ENCODE measurements at regions of chr6 and their contacts with region 1.

Region 1: GRCh38 chr6:291697-292505 is at the start of gene DUSP22:
- DNase-seq: peak; percentile 76 to 79
- ATAC-seq: peak; percentile 79 to 83
- H3K4me3 ChIP-seq: peak within 1 kb of the TSS; percentile 66 to 88 (median 78)
- H3K27ac ChIP-seq: peak within 1 kb of the TSS; percentile 88 to 98 (median 96)
- H3K4me1 ChIP-seq: peaks cover 31 to 36% of the 10 kb centered on the region in 2 donors
- H3K27me3 ChIP-seq: no peaks in the 10 kb centered on the region
- CTCF ChIP-seq: peak in 2 of 5 experiments; percentile 8 to 13
- POLR2A ChIP-seq: peak; percentile 94 to 95
- total RNA-seq, gene DUSP22: 53.4 to 70.7 (median 61.3) TPM

Region 2: GRCh38 chr6:181049-181654 is 110.7 kb before region 1 on chr6:
- in situ Hi-C with region 1: no loop called
- intact Hi-C with region 1: no loop called
- DNase-seq: no peak
- ATAC-seq: no peak
- H3K4me3 ChIP-seq: no peak overlapping the region
- H3K27ac ChIP-seq: no peak overlapping the region
- H3K4me1 ChIP-seq: no peaks in the 10 kb centered on the region
- H3K27me3 ChIP-seq: no peaks in the 10 kb centered on the region
- CTCF ChIP-seq: no peak
- POLR2A ChIP-seq: no peak

Region 3: GRCh38 chr6:1757131-1757530 is 1465.2 kb after region 1 on chr6:
- in situ Hi-C with region 1: no loop called
- intact Hi-C with region 1: loop called (anchors 5 kb)
- DNase-seq: no peak
- ATAC-seq: no peak
- H3K4me3 ChIP-seq: no peak overlapping the region
- H3K27ac ChIP-seq: no peak overlapping the region
- H3K4me1 ChIP-seq: no peaks in the 10 kb centered on the region
- H3K27me3 ChIP-seq: no peaks in the 10 kb centered on the region
- CTCF ChIP-seq: no peak
- POLR2A ChIP-seq: no peak

Measured in gastrocnemius medialis (tissue), 4 donors.